Esophagus muscularis mucosa (tissue), 4 donors: ENCODE measurements at regions of chr3 and their contacts with region 1.

Region 1: GRCh38 chr3:8301728-8302462 is 199.7 kb upstream of the LMCD1 start:
- DNase-seq: peak; percentile 45
- H3K4me3 ChIP-seq: no peak overlapping the region
- H3K27ac ChIP-seq: no peak overlapping the region
- H3K4me1 ChIP-seq: no peaks in the 10 kb centered on the region
- H3K27me3 ChIP-seq: no peaks in the 10 kb centered on the region
- CTCF ChIP-seq: peak; percentile 59 to 73 (median 61)
- EP300 ChIP-seq: no peak
- POLR2A ChIP-seq: no peak

Region 2: GRCh38 chr3:6785726-6786125 is 1516.2 kb before region 1 on chr3:
- intact Hi-C with region 1: loop called (anchors 10 kb)
- DNase-seq: no peak
- H3K4me3 ChIP-seq: no peak overlapping the region
- H3K27ac ChIP-seq: no peak overlapping the region
- H3K4me1 ChIP-seq: no peaks in the 10 kb centered on the region
- H3K27me3 ChIP-seq: no peaks in the 10 kb centered on the region
- CTCF ChIP-seq: no peak
- EP300 ChIP-seq: no peak
- POLR2A ChIP-seq: no peak

Region 3: DNA sequence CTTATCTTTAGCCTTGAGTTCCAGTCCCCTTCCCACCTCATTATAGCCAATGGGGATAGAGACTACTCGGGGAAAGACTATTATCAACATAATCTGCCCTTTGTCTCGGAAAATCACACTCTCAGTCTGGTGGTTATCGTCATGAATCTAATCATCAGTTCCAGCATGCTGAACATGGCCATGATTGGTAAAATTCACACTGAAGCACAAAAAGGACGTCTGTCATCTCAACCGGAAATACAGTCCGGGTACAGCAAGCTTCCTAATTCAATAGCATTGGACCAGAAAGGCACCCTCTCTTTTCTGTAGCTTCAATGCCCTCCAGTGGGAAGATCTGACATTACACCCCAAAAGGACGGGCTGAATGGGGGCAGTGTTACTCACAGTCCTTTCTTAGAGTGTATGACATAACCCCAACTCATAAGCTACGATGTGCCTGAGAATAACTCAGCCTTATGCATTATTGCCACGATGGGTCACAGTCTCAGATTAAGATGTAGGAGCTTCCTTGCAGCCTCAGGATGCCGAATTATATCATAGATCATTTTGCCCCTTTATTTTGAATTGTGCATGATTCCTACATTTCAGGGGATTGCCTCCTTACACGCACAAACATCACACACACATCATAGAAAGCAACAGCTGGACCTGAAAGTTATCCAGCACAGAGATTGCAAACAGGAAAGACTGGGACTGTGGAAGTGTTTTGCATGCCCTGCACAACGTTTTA is 190.7 kb before region 1 on chr3:
- intact Hi-C with region 1: loop called (anchors 5 kb)
- DNase-seq: no peak
- H3K4me3 ChIP-seq: peak overlapping the region in 3 of 4 donors; percentile 5 to 38 (median 13)
- H3K27ac ChIP-seq: no peak overlapping the region
- H3K4me1 ChIP-seq: peaks cover 0 to 12% (median 9%) of the 10 kb centered on the region in 4 donors
- H3K27me3 ChIP-seq: no peaks in the 10 kb centered on the region
- CTCF ChIP-seq: peak; percentile 72 to 86 (median 77)
- EP300 ChIP-seq: no peak
- POLR2A ChIP-seq: no peak

Region 4: GRCh38 chr3:8254489-8254888 is 47.4 kb before region 1 on chr3:
- intact Hi-C with region 1: no loop called
- DNase-seq: no peak
- H3K4me3 ChIP-seq: no peak overlapping the region
- H3K27ac ChIP-seq: no peak overlapping the region
- H3K4me1 ChIP-seq: peaks cover 0 to 12% (median 9%) of the 10 kb centered on the region in 4 donors
- H3K27me3 ChIP-seq: no peaks in the 10 kb centered on the region
- CTCF ChIP-seq: no peak
- EP300 ChIP-seq: no peak
- POLR2A ChIP-seq: no peak